ENCODE measurements at regions of chr10 and their contacts with region 1.

Region 1: GRCh38 chr10:131556897-131557495 is 245.5 kb upstream of the TCERG1L start:
- DNase-seq: no peak
- H3K4me3 ChIP-seq: no peak overlapping the region
- H3K27ac ChIP-seq: no peak overlapping the region
- H3K4me1 ChIP-seq: no peaks in the 10 kb centered on the region
- H3K27me3 ChIP-seq: peaks cover 0 to 42% of the 10 kb centered on the region in 2 donors
- CTCF ChIP-seq: no peak
- POLR2A ChIP-seq: no peak

Region 2: GRCh38 chr10:131290781-131291180 is 266.2 kb before region 1 on chr10:
- intact Hi-C with region 1: no loop called
- DNase-seq: no peak
- H3K4me3 ChIP-seq: no peak overlapping the region
- H3K27ac ChIP-seq: no peak overlapping the region
- H3K4me1 ChIP-seq: no peaks in the 10 kb centered on the region
- H3K27me3 ChIP-seq: no peaks in the 10 kb centered on the region
- CTCF ChIP-seq: no peak
- POLR2A ChIP-seq: no peak

Region 3: GRCh38 chr10:131480861-131481260 is 76.1 kb before region 1 on chr10:
- intact Hi-C with region 1: no loop called
- DNase-seq: no peak
- H3K4me3 ChIP-seq: no peak overlapping the region
- H3K27ac ChIP-seq: no peak overlapping the region
- H3K4me1 ChIP-seq: no peaks in the 10 kb centered on the region
- H3K27me3 ChIP-seq: peaks cover 0 to 19% of the 10 kb centered on the region in 2 donors
- CTCF ChIP-seq: no peak
- POLR2A ChIP-seq: no peak

Region 4: DNA sequence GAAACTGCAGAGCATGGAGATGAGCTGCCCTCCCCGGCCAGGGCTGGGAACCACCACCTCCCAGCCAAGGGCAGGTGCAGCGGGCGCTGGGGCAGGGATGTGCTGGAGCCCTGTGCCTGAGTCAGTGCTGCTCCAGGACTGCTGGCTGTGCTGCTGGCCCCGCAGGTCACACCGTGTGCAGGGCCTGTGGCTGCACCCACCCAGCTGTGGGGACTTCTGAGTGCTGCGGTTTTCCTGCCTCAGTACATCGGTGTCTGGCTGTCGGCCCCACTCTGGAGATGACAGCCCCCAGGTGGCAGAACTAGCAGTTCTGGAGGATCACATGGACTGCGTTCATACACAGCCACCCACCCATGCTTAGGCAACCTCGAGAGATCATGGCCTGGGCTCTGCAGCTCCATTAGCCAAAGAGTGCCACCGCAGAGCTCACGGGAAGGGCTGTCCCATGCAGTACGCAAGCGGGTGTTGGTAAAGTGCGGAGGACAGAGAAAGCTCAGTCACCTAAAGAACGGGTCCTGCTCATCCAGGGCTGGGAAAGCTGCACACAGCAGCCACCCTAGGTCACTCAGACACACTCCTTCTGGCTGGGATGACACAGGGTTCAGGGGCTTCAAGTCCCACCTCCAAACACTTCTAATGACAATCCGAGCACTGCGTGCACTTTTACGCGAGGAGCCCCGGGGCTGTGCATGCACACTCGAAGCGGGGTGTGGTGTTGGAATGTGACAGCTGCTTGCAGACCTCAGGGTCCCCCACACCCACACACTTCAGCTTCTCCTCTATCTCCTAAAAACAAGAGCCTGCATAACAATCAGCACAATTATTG is 145.7 kb after region 1 on chr10:
- intact Hi-C with region 1: loop called (anchors 5 kb)
- DNase-seq: no peak
- H3K4me3 ChIP-seq: no peak overlapping the region
- H3K27ac ChIP-seq: no peak overlapping the region
- H3K4me1 ChIP-seq: no peaks in the 10 kb centered on the region
- H3K27me3 ChIP-seq: peaks cover 0 to 52% of the 10 kb centered on the region in 2 donors
- CTCF ChIP-seq: no peak
- POLR2A ChIP-seq: no peak

Measured in breast epithelium (tissue), 4 donors.